HEK293 (cell line): ENCODE measurements at regions of chr14 and their contacts with region 1.

Region 1: GRCh38 chr14:103130965-103131364 is 7.7 kb downstream of the TNFAIP2 start:
- H3K4me3 ChIP-seq: no peak overlapping the region
- H3K27ac ChIP-seq: peak overlapping the region; percentile 34
- H3K4me1 ChIP-seq: peaks cover 8% of the 10 kb centered on the region; the same call in 1 of the 2 replicates
- CTCF ChIP-seq: no peak

Region 2: GRCh38 chr14:103141119-103141796 is 10.3 kb after region 1 on chr14:
- CTCF ChIA-PET with region 1: interaction called, 16 read pairs
- POLR2A ChIA-PET with region 1: interaction called, 7 read pairs
- H3K4me3 ChIP-seq: no peak overlapping the region
- H3K27ac ChIP-seq: no peak overlapping the region
- H3K4me1 ChIP-seq: no peaks in the 10 kb centered on the region
- CTCF ChIP-seq: peak; percentile 58

Region 3: DNA sequence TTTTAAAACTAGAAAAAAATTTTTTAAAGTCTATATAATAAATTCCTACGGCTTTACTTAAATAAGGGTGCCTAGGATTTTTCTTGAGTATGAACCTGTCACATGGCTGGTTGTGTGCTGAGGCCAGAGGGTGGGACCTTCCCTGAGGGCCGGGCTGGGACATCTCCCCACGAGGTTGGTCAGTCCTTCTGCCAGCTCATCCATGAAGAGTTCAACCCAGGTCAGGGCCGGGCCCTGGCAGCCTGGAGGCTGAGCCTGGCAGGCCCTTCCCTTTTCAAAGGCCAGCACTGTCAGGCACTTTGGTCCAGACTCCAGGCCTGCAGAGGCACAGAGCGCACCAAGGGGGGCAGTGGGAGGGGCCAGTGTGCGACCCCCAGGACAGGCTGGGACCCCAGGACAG is 24.0 kb after region 1 on chr14:
- CTCF ChIA-PET with region 1: no interaction called
- POLR2A ChIA-PET with region 1: no interaction called
- H3K4me3 ChIP-seq: no peak overlapping the region
- H3K27ac ChIP-seq: no peak overlapping the region
- H3K4me1 ChIP-seq: no peaks in the 10 kb centered on the region
- CTCF ChIP-seq: no peak

Region 4: DNA sequence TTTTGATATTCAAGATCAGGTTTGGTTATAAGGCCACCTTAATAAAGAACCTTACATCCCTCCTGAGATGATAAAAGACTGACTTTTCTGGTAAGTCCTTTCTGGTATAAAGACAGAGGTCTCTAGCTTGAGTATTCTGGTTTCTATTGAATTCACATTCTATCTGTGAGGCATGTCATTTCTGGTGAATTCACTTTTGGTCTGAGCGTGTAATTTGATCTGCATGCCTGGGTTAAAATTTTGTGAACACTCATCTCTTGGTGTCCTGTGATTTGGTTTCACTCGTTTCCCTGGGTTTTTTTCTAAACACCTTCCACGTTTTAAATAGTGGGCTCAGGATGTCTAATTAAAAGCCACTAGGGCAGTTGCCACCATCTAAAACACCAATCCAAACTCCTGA is 215.3 kb after region 1 on chr14:
- CTCF ChIA-PET with region 1: no interaction called
- POLR2A ChIA-PET with region 1: no interaction called
- H3K4me3 ChIP-seq: no peak overlapping the region
- H3K27ac ChIP-seq: no peak overlapping the region
- H3K4me1 ChIP-seq: no peaks in the 10 kb centered on the region
- CTCF ChIP-seq: no peak

Region 5: GRCh38 chr14:103385152-103385993 is 254.4 kb after region 1 on chr14 and contains the start of gene MARK3:
- CTCF ChIA-PET with region 1: no interaction called
- POLR2A ChIA-PET with region 1: no interaction called
- H3K4me3 ChIP-seq: peak within 1 kb of the TSS; percentile 97
- H3K27ac ChIP-seq: peak within 1 kb of the TSS; percentile 92
- H3K4me1 ChIP-seq: 0 out of 2 replicates have a peak, but pooled peaks cover 2% of the 10 kb centered on the region
- CTCF ChIP-seq: peak; percentile 91